MCF 10A (cell line): ENCODE measurements at regions of chr3 and their contacts with region 1.

Region 1: DNA sequence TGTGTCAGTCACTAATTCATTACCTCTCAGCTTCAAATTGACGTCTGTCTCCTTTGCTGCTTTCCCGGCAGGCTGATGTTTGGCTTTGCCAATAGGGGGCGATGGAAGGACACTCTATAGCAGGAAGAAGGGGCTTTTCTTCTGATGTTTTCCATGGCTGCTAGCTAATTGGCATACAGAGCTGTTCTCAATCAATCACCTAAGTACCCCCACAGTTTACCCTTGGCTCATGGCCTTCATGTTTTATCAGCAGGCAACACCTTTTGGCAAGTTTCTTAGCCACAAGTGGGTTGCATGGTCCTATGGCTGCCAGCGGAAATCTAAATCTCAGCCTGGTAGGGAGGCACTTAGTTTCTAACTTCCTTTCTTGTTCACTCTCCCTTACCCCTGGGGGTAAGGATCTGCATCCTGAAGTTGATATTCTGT is 45.0 kb downstream of the ESYT3 start:
- DNase-seq: peak; percentile 62
- H3K4me3 Mint-ChIP-seq: no peak overlapping the region
- H3K27ac Mint-ChIP-seq: peak overlapping the region; percentile 57
- H3K4me1 Mint-ChIP-seq: peaks cover 6% of the 10 kb centered on the region
- H3K27me3 Mint-ChIP-seq: no peaks in the 10 kb centered on the region
- CTCF ChIP-seq: peak; percentile 88

Region 2: DNA sequence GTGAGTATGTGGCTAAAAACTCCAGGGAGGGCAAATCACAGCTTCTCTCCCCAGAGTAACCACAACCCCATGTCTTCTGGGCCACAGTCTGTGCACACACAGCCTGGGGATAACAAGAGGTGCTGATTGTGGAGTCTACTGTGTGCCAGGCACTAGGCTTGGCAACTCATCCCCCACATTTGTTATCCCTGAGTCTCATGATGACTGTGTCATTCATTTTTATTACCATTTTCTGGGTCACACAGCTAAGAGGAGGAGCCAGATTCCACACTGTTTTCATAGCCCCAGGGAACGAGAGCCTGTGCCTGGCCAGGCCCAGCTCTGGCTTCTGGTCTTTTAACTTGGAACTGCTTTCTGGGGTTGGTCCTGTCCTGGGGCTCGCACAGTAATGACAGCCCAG is 10.6 kb before region 1 on chr3:
- CTCF ChIA-PET with region 1: interaction called, 19 read pairs
- POLR2A ChIA-PET with region 1: interaction called, 3 read pairs
- intact Hi-C with region 1: no loop called
- DNase-seq: peak; percentile 35
- H3K4me3 Mint-ChIP-seq: no peak overlapping the region
- H3K27ac Mint-ChIP-seq: no peak overlapping the region
- H3K4me1 Mint-ChIP-seq: peaks cover 6% of the 10 kb centered on the region
- H3K27me3 Mint-ChIP-seq: no peaks in the 10 kb centered on the region
- CTCF ChIP-seq: no peak

Region 3: GRCh38 chr3:138694287-138695007 is 215.0 kb after region 1 on chr3:
- CTCF ChIA-PET with region 1: interaction called, 3 read pairs
- POLR2A ChIA-PET with region 1: no interaction called
- intact Hi-C with region 1: loop called (anchors 5 kb)
- DNase-seq: peak; percentile 80
- H3K4me3 Mint-ChIP-seq: peak overlapping the region; percentile 2
- H3K27ac Mint-ChIP-seq: peak overlapping the region; percentile 43
- H3K4me1 Mint-ChIP-seq: peaks cover 8% of the 10 kb centered on the region
- H3K27me3 Mint-ChIP-seq: no peaks in the 10 kb centered on the region
- CTCF ChIP-seq: no peak